AG04450 (cell line): ENCODE measurements at regions of chr2 and their contacts with region 1.

Region 1: DNA sequence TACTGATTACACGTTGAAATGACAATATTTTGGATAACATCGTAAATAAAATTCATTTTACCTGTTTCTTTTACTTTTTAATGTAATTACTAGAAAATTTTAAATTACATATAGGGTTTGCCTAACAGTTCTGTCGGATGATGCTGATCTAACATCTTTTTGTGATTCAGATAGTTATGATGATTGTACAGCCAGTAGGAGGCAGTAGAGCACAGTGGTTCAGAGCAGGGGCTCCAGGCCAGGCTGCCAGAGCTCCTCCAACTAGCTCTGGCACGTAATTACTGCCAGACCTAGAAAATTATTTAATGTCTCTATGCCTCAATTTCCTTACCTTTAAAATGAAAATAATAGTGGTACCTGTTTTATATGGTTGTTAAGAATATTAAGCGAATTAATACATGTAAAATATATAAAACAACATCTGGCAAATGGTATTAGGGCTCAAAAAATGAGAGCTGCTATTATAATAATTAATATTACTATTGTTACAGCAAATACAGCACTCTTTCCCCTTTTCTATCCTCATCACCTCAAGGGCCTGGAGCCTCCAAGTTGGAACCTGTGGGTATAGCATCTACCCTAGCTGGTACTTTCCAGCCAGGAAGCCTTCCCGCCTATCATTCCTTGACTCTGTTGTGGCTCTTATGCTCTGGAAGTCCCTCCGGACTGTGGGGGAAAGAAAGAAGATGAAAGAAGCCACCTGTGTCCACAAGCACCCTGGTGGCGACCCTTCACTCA is 47.7 kb upstream of the PLA2R1 start:
- DNase-seq: peak; percentile 57
- H3K4me3 ChIP-seq: no peak overlapping the region
- H3K27ac ChIP-seq: no peak overlapping the region
- H3K27me3 ChIP-seq: no peaks in the 10 kb centered on the region
- CTCF ChIP-seq: peak; percentile 79

Region 2: DNA sequence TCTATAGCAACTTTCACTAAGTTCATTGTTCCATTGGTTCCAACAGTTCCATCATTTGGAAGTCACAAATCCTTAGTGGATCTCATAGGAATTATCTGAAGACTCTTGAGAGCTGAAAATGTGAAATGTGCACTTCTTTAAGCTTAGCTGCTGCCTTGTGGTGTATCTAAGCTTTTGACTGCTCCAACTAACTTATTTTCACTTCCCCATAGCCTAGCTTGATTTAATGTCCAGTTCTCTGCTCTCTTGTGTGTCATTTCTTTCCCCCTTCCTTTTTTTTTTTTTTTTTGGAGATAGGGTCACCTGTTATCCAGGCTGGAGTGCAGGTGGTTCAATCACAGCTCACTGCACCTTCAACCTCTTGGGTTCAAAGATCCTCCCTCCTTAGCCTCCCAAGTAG is 277.2 kb before region 1 on chr2:
- CTCF ChIA-PET with region 1: no interaction called
- POLR2A ChIA-PET with region 1: no interaction called
- DNase-seq: no peak
- H3K4me3 ChIP-seq: no peak overlapping the region
- H3K27ac ChIP-seq: no peak overlapping the region
- H3K27me3 ChIP-seq: peaks cover 10% of the 10 kb centered on the region
- CTCF ChIP-seq: no peak

Region 3: DNA sequence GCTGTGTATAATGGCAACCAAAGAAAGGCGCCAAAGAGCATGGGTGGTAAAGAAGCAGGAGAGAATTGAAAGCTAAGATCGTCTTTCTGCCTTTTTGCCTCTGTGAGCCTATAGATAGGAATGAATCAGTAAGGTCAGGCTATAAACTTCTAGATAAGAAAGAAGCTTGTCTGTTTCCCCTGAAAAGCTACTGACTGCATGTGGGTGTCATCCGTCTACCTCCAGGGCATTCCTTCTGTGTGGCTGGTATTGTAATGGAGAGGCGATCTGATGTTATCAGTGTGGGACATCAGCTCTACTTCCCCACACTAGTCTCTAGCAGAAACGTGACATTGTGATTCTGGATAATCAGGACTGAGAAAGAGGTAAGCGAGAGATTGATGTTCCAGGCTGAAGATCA is 15.7 kb after region 1 on chr2:
- CTCF ChIA-PET with region 1: interaction called, 10 read pairs
- POLR2A ChIA-PET with region 1: no interaction called
- DNase-seq: no peak
- H3K4me3 ChIP-seq: no peak overlapping the region
- H3K27ac ChIP-seq: no peak overlapping the region
- H3K27me3 ChIP-seq: no peaks in the 10 kb centered on the region
- CTCF ChIP-seq: no peak

Region 4: DNA sequence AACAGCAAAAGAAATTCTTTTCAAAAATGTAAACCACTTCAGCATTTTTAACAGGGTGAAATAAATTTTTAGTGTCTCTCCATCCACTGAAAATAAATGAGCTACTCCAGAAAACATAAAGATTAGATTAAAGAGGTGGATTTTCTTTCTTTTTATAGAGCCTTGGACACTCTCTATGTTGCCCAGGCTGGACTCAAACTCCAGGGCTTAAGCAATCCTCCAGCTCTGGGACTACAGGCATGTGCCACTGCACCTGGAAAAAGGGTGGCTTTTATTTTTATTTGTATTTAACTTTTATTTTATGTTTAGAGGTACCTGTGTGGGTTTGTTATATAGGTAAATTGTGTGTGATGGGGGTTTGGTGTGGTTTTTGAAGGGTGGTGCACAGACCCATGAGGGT is 70.1 kb after region 1 on chr2:
- CTCF ChIA-PET with region 1: no interaction called
- POLR2A ChIA-PET with region 1: no interaction called
- DNase-seq: no peak
- H3K4me3 ChIP-seq: no peak overlapping the region
- H3K27ac ChIP-seq: no peak overlapping the region
- H3K27me3 ChIP-seq: no peaks in the 10 kb centered on the region
- CTCF ChIP-seq: no peak

Region 5: GRCh38 chr2:160210599-160211138 is 100.6 kb after region 1 on chr2:
- CTCF ChIA-PET with region 1: interaction called, 12 read pairs
- POLR2A ChIA-PET with region 1: interaction called, 3 read pairs
- DNase-seq: no peak
- H3K4me3 ChIP-seq: no peak overlapping the region
- H3K27ac ChIP-seq: peak overlapping the region; percentile 52
- H3K27me3 ChIP-seq: no peaks in the 10 kb centered on the region
- CTCF ChIP-seq: peak; percentile 66

Region 6: GRCh38 chr2:160252278-160252887 is 142.3 kb after region 1 on chr2:
- CTCF ChIA-PET with region 1: interaction called, 11 read pairs
- POLR2A ChIA-PET with region 1: no interaction called
- DNase-seq: no peak
- H3K4me3 ChIP-seq: no peak overlapping the region
- H3K27ac ChIP-seq: no peak overlapping the region
- H3K27me3 ChIP-seq: no peaks in the 10 kb centered on the region
- CTCF ChIP-seq: peak; percentile 84

Region 7: GRCh38 chr2:160269803-160270570 is 159.9 kb after region 1 on chr2:
- CTCF ChIA-PET with region 1: interaction called, 10 read pairs
- POLR2A ChIA-PET with region 1: interaction called, 7 read pairs
- DNase-seq: peak; percentile 80
- H3K4me3 ChIP-seq: peak overlapping the region; percentile 52
- H3K27ac ChIP-seq: peak overlapping the region; percentile 96
- H3K27me3 ChIP-seq: no peaks in the 10 kb centered on the region
- CTCF ChIP-seq: peak; percentile 75

Region 8: DNA sequence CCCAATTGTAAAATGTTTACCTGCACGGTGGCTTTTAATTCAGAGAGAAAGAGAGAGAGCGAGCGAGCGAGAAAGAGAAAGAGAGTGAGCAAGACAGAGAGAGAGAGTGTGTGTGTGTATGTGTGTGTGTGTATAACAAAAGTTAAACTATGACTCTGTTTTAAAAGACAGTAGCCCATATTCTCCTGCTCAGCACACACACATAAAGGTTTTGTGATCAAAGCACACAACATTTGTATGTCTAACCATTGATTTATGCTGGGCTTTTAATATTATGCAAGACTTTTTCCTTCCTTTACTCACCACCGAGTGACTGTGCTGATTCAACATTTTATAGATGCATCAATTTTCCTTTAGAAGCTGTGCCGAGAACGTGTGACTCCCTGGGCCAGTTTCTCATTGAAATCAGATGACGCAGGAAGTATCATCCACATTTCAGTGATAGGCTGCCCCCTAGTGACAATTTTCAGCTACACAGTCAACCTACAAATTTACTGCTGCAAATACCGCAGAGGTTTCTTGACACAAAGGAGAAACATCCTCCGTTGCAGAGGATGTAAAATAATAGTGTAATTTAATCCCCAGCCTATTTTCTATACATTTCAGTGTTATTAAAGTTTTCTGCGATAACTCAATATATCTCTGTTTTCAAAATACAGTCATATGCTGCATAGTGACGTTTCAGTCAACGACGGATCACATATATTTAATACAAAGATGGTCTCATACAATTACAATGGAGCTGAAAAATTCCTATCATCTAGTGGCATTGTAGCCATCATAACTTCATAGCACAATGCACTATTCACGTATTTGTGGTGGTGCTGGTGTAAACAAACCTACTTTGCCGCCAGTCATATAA is 884.3 kb after region 1 on chr2:
- CTCF ChIA-PET with region 1: interaction called, 44 read pairs
- POLR2A ChIA-PET with region 1: no interaction called
- DNase-seq: peak; percentile 76
- H3K4me3 ChIP-seq: no peak overlapping the region
- H3K27ac ChIP-seq: no peak overlapping the region
- H3K27me3 ChIP-seq: no peaks in the 10 kb centered on the region
- CTCF ChIP-seq: peak; percentile 78

Region 9: GRCh38 chr2:161004379-161004778 is 894.3 kb after region 1 on chr2:
- CTCF ChIA-PET with region 1: interaction called, 16 read pairs
- POLR2A ChIA-PET with region 1: no interaction called
- DNase-seq: no peak
- H3K4me3 ChIP-seq: no peak overlapping the region
- H3K27ac ChIP-seq: no peak overlapping the region
- H3K27me3 ChIP-seq: no peaks in the 10 kb centered on the region
- CTCF ChIP-seq: peak; percentile 53